ENCODE measurements at regions of chr1 and their contacts with region 1.

Region 1: DNA sequence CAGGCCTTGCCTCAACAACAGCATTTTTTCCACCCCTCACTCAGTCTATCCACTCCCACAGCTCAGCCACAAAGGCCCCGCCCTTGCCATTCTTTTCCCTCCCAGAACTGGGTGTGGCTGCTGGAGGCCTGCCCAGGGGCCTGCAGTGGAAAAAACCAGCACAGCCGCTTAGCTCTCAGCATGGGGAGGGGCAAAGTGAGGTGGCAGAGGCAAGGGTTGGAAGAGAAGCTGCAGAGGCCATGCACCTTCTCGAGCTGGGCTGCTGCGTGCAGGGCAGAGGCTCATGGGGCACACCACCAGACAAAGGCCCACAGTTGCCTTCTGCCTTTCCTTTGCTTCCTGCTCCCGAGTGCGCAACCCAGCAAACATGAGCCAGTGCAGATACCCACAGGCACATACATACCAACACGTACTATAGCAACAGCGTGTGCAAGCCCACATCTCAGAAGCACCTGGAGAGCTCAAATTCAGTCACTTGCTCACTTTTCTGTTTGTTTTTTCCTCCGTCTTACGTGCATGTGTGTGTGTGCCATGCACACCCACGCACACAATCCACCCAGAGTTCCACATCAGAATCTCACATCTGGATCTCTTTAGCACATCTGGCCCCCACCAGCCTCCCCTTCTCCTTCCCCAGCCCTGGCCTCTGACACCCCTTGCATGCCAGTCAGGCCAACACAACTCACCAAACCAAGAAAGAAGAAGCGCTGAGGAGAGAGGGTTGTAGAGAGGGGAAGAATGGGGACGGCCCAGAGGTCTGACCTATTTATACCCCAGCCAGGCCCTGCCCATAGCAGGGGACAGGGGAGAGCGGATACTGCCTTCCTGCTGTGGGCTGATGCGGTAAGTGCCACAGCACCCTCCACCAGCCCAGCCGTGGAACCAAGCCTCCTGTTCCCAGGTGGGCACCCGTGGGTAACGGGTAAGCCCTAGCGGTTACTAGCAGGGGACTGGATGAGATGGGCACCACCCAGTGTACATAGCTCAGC is at the start of gene S100A4:
- DNase-seq: peak; percentile 99
- H3K4me3 Mint-ChIP-seq: peak within 1 kb of the TSS; percentile 72
- H3K27ac Mint-ChIP-seq: peak within 1 kb of the TSS; percentile 92
- H3K4me1 Mint-ChIP-seq: peaks cover 89% of the 10 kb centered on the region
- H3K27me3 Mint-ChIP-seq: no peaks in the 10 kb centered on the region
- CTCF ChIP-seq: no peak
- total RNA-seq, gene S100A4: 27.2 and 60.7 TPM in 2 replicates

Region 2: DNA sequence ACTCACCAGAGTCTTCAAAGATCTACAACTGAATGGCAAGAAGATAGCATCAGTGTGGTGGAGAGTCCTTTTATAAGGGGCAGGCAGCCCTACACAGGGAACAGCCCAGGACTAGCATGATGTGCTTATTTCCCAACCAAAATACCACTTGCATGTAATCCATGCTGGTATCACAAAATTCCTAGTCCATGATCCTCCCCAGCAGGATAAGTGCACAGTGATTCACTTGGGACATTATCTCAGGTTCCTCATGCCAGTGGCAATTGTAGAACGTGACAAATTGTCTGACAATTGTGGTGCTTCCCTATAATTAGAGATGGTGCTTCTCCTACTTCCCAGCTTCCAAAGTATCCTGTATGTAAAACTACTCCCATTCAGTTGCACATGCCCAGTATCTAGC is 394.5 kb before region 1 on chr1 and contains the start of gene SPRR2G:
- CTCF ChIA-PET with region 1: no interaction called
- POLR2A ChIA-PET with region 1: no interaction called
- intact Hi-C with region 1: no loop called
- DNase-seq: no peak
- H3K4me3 Mint-ChIP-seq: no peak within 1 kb of the TSS
- H3K27ac Mint-ChIP-seq: no peak within 1 kb of the TSS
- H3K4me1 Mint-ChIP-seq: no peaks in the 10 kb centered on the region
- H3K27me3 Mint-ChIP-seq: no peaks in the 10 kb centered on the region
- CTCF ChIP-seq: no peak
- total RNA-seq, gene SPRR2G: not detected in 2 replicates

Region 3: DNA sequence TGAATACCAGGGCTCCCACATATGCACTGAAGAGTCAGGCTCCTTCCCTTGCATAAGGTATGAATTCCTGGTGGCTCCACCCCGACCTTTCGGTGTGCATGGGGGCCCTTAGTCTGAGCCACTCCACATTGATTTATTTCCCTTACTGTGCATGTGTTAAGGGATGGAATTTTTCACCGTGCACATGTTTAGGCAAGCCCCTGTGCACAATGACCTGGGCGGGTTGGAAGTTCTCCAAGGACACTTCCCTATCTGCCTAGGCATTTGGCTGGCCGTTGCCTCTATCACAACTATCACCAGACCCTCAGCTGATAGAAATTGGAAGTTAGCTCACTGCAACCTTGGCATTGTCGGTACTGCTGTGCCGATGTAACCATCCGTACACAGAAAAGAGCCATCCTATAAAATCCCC is 19.2 kb before region 1 on chr1:
- CTCF ChIA-PET with region 1: interaction called, 146 read pairs
- POLR2A ChIA-PET with region 1: interaction called, 2,106 read pairs
- intact Hi-C with region 1: loop called (anchors 1 kb)
- DNase-seq: peak; percentile 94
- H3K4me3 Mint-ChIP-seq: peak overlapping the region; percentile 29
- H3K27ac Mint-ChIP-seq: peak overlapping the region; percentile 85
- H3K4me1 Mint-ChIP-seq: peaks cover 38% of the 10 kb centered on the region
- H3K27me3 Mint-ChIP-seq: no peaks in the 10 kb centered on the region
- CTCF ChIP-seq: no peak

Region 4: GRCh38 chr1:153532769-153533599 is 12.4 kb before region 1 on chr1:
- CTCF ChIA-PET with region 1: interaction called, 146 read pairs
- POLR2A ChIA-PET with region 1: interaction called, 2,106 read pairs
- intact Hi-C with region 1: loop called (anchors 1 kb)
- DNase-seq: peak; percentile 97
- H3K4me3 Mint-ChIP-seq: peak overlapping the region; percentile 99
- H3K27ac Mint-ChIP-seq: peak overlapping the region; percentile 75
- H3K4me1 Mint-ChIP-seq: peaks cover 47% of the 10 kb centered on the region
- H3K27me3 Mint-ChIP-seq: no peaks in the 10 kb centered on the region
- CTCF ChIP-seq: peak; percentile 93

Region 5: GRCh38 chr1:153561466-153561985 is 16.2 kb after region 1 on chr1:
- CTCF ChIA-PET with region 1: interaction called, 35 read pairs
- POLR2A ChIA-PET with region 1: interaction called, 2,106 read pairs
- intact Hi-C with region 1: loop called (anchors 2 kb)
- DNase-seq: no peak
- H3K4me3 Mint-ChIP-seq: peak overlapping the region; percentile 67
- H3K27ac Mint-ChIP-seq: peak overlapping the region; percentile 92
- H3K4me1 Mint-ChIP-seq: peaks cover 48% of the 10 kb centered on the region
- H3K27me3 Mint-ChIP-seq: no peaks in the 10 kb centered on the region
- CTCF ChIP-seq: no peak

Measured in MCF 10A (cell line).